ENCODE measurements at regions of chr4 and their contacts with region 1.

Region 1: GRCh38 chr4:120977435-120977997 is 55.0 kb upstream of the PRDM5 start:
- DNase-seq: peak; percentile 15
- H3K4me3 ChIP-seq: no peak overlapping the region
- H3K27ac ChIP-seq: no peak overlapping the region
- H3K4me1 ChIP-seq: no peaks in the 10 kb centered on the region
- H3K27me3 ChIP-seq: no peaks in the 10 kb centered on the region
- CTCF ChIP-seq: peak; percentile 65
- EP300 ChIP-seq: no peak
- RAD21 ChIP-seq: peak; percentile 65

Region 2: DNA sequence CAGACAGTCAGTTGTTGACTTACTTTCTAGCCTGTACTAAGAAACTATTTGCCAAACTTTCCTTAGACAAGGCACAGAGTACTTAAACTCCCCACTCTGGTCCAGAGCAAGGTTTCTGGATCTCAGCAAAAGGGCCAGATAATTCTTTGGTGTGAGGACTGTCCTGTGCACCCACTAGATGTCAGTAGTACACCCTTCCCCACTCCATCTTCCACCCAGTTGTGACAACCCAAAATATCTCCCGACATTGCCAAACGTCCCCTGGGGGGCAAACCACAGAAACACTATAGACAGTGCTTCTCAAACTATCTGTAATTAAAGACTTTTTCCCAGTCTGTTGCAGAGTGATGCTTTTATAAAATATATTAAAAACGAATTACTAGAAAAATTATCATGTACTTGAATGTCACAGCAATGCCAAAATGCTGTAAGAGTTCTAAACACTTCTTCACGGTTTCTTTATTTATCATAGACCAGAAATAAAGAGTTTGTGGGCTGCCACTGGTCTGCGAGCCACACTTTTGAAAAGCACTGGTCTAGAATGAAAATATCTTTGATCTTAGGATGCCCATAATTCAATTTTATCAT is 258.4 kb before region 1 on chr4:
- CTCF ChIA-PET with region 1: interaction called, 10 read pairs
- POLR2A ChIA-PET with region 1: no interaction called
- DNase-seq: peak; percentile 34
- H3K4me3 ChIP-seq: no peak overlapping the region; a peak in 1 of 4 replicates
- H3K27ac ChIP-seq: no peak overlapping the region
- H3K4me1 ChIP-seq: peaks cover 0 to 13% of the 10 kb centered on the region in 2 experiments; a peak in 2 of 4 replicates
- H3K27me3 ChIP-seq: no peaks in the 10 kb centered on the region
- CTCF ChIP-seq: peak; percentile 77
- EP300 ChIP-seq: no peak
- RAD21 ChIP-seq: peak; percentile 92

Region 3: DNA sequence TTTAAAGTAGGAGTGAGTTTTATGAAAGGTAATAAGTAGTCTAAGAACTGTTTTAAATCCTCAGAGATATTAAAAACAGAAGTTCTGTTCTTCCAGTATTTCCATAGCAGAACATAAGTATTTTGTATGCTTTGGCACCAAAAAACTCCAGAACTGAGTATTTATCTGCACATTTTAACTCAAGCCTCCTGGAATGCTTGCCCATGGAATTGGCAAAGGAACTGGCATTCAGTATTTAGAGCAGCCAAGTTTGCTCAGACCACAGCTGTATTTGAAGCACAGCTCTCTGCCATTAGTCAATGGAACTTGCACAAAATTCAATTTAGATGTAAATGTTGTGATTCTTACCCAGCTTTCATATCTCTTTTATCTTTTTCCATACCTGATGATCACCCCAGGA is 52.6 kb after region 1 on chr4:
- CTCF ChIA-PET with region 1: no interaction called
- POLR2A ChIA-PET with region 1: no interaction called
- DNase-seq: no peak
- H3K4me3 ChIP-seq: no peak overlapping the region
- H3K27ac ChIP-seq: no peak overlapping the region
- H3K4me1 ChIP-seq: no peaks in the 10 kb centered on the region
- H3K27me3 ChIP-seq: no peaks in the 10 kb centered on the region
- CTCF ChIP-seq: no peak
- EP300 ChIP-seq: no peak
- RAD21 ChIP-seq: no peak